CD4-positive, alpha-beta memory T cell (primary cell): ENCODE measurements at regions of chr10 and their contacts with region 1.

Region 1: DNA sequence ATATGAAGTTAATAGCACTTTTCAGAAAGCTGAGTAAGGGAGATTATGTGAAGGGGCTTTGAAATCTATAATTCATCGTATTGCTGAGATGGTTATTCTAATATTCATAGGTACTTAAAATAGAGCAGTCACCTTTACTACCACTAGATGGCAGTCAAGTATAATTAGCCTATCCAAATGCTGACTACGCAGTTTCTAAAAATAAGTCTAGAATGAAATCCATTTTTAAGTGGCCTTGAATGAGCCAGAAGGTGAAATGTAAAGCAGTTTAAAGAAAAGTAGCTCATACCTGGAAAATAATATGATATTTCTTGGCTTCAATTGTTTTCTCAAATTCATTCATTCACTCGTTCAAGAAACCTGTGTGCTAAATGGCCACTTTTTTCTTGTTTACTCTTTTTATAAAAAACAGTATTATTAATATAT is 1277.1 kb downstream of the GATA3 start:
- DNase-seq: peak in 4 of 5 donors; percentile 44 to 52 (median 46)
- H3K4me3 ChIP-seq: no peak overlapping the region
- H3K4me3 Mint-ChIP-seq: no peak overlapping the region
- H3K27ac ChIP-seq: no peak overlapping the region
- H3K27ac Mint-ChIP-seq: no peak overlapping the region
- H3K4me1 ChIP-seq: no peaks in the 10 kb centered on the region
- H3K4me1 Mint-ChIP-seq: no peaks in the 10 kb centered on the region
- H3K27me3 ChIP-seq: no peaks in the 10 kb centered on the region
- H3K27me3 Mint-ChIP-seq: peaks cover 13 to 20% of the 10 kb centered on the region in 2 donors

Region 2: DNA sequence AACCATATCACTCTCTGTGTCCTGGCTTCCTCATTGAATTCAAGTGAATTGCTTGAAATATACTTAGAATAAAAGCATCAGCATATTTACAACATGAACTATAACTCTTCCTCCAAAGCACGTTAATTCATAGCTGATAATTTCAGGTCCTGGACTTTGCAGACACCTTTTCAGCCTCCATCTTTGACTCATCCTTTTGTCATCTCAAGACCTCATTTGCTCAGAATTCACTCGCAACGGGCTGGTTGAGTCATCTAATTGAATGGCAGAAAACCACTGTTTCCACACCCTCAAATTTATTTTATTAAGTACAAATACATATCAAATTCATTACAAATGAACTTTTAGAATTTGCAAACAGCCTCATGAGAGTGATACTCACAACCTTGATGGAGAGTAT is 731.4 kb before region 1 on chr10:
- CTCF ChIA-PET with region 1: no interaction called
- POLR2A ChIA-PET with region 1: no interaction called
- intact Hi-C with region 1: no loop called
- DNase-seq: no peak
- H3K4me3 ChIP-seq: no peak overlapping the region
- H3K4me3 Mint-ChIP-seq: no peak overlapping the region
- H3K27ac ChIP-seq: no peak overlapping the region
- H3K27ac Mint-ChIP-seq: no peak overlapping the region
- H3K4me1 ChIP-seq: no peaks in the 10 kb centered on the region
- H3K4me1 Mint-ChIP-seq: no peaks in the 10 kb centered on the region
- H3K27me3 ChIP-seq: no peaks in the 10 kb centered on the region
- H3K27me3 Mint-ChIP-seq: peaks cover 8 to 9% of the 10 kb centered on the region in 2 donors

Region 3: DNA sequence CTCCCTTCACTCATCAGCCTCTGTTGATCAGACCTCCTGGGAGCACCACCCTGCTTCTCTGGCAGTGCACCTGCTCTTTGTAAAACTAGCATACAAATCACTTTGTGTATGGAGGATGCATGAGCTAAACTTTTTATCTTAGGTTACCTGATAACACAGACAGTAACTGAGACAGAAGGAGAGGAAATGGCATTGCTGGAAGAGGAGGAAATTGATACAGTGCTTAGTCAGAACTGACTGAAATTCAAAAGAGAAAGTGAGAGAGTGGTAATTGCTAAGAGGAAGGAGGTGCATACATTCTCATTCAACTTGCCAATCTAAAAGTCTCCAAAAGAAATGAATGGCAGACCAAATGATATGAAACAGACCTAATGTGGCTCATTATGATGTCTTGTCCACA is 156.4 kb before region 1 on chr10:
- CTCF ChIA-PET with region 1: no interaction called
- POLR2A ChIA-PET with region 1: no interaction called
- intact Hi-C with region 1: no loop called
- DNase-seq: peak in 2 of 5 donors; percentile 2
- H3K4me3 ChIP-seq: no peak overlapping the region
- H3K4me3 Mint-ChIP-seq: peak overlapping the region in 2 of 8 donors; percentile 20 to 37
- H3K27ac ChIP-seq: no peak overlapping the region
- H3K27ac Mint-ChIP-seq: peak overlapping the region in 3 of 7 donors; percentile 5 to 59 (median 49)
- H3K4me1 ChIP-seq: peaks cover 8% of the 10 kb centered on the region
- H3K4me1 Mint-ChIP-seq: peaks cover 0 to 13% (median 6%) of the 10 kb centered on the region in 4 donors
- H3K27me3 ChIP-seq: no peaks in the 10 kb centered on the region
- H3K27me3 Mint-ChIP-seq: peaks cover 0 to 4% of the 10 kb centered on the region in 2 donors

Region 4: DNA sequence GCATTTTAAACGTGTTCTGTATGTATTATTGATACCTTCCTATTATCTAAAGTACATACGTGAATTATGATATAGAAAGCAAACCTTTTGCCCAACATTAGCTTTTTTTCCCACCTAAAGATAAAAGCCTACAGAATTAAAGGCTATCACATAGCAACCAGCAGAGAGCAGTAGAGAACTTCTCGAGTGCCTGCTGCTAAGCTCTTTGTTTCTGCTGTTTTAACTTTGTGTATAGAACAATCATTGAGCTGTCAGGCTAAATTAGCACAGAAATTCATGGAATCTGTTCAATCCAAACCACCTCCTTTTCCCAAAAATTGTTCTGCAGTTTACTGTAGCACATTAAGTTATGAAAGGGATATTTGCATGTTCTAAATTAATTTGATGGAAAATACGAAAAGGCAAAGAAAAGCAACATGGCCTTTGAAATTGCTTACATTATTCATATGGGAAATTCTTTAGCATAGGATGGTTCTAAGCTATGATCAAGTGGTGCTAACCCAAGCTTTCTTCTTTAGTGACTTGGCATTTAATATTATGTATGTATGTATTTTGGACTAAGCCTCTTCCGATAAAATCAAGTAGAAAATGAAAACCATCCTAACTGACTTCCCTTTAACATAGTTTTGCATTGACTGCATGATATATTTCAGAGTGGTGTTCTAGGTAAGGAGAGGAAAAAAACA is 11.4 kb after region 1 on chr10:
- CTCF ChIA-PET with region 1: interaction called, 14 read pairs
- POLR2A ChIA-PET with region 1: no interaction called
- intact Hi-C with region 1: no loop called
- DNase-seq: peak in 3 of 5 donors; percentile 10 to 18 (median 16)
- H3K4me3 ChIP-seq: no peak overlapping the region
- H3K4me3 Mint-ChIP-seq: peak overlapping the region in 1 of 8 donors; percentile 23
- H3K27ac ChIP-seq: no peak overlapping the region
- H3K27ac Mint-ChIP-seq: no peak overlapping the region
- H3K4me1 ChIP-seq: no peaks in the 10 kb centered on the region
- H3K4me1 Mint-ChIP-seq: peaks cover 0 to 6% (median 0%) of the 10 kb centered on the region in 4 donors
- H3K27me3 ChIP-seq: no peaks in the 10 kb centered on the region
- H3K27me3 Mint-ChIP-seq: peaks cover 2 to 4% of the 10 kb centered on the region in 2 donors